Left ventricle myocardium inferior (tissue), 1 donor: ENCODE measurements at regions of chr5 and their contacts with region 1.

Region 1: DNA sequence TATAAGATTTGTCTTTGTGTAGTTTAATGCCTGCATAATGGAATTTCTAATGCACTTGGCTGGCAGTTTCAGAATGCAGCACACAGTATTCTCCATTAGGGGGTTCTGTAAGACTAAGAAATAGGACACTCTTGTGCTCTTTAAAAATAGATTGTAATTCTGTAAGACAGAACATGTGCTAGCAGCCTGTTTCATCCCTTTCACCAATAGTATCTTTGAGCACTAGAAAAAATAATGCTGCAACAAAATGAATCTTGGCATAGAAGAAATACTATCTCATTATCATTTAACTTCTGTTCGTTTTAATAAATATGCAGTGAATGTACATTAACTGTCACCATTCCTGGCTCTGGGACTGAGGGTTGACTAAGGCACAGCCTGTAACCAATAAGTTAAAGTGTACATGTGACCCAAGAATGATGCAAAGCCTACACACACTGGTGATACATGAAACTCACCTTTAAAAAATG is 23.8 kb upstream of the ZNF622 start:
- DNase-seq: no peak
- H3K4me3 ChIP-seq: no peak overlapping the region
- H3K27ac ChIP-seq: peak overlapping the region; percentile 86
- H3K4me1 ChIP-seq: peaks cover 95% of the 10 kb centered on the region
- H3K27me3 ChIP-seq: no peaks in the 10 kb centered on the region
- CTCF ChIP-seq: peak; percentile 77

Region 2: GRCh38 chr5:16364910-16365309 is 124.4 kb before region 1 on chr5:
- intact Hi-C with region 1: no loop called
- DNase-seq: no peak
- H3K4me3 ChIP-seq: no peak overlapping the region
- H3K27ac ChIP-seq: no peak overlapping the region
- H3K4me1 ChIP-seq: no peaks in the 10 kb centered on the region
- H3K27me3 ChIP-seq: no peaks in the 10 kb centered on the region
- CTCF ChIP-seq: no peak

Region 3: DNA sequence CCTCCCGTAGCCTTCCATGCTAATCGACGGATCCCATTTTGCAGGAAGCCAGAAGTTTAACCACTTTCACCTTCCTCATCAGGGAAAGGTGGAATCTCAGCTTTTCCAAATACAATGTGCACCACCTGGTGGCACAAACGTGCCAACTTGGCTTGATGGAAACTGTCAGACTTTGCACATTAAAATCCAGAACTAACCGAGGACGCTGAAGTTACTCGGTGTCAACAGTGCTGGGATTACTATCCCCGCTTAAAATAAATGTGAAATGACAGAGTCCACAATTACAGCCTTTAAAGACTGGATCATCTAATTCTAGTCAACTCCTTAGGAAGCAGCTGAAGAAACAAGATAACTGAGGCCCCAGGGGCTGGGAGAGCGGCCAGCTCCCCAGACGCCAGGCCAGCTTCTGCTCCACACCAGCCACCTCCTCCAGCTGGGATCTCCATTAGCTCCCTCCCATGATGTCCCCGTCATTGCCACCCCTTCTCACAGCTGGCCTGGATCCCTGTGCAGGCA is 177.6 kb after region 1 on chr5:
- intact Hi-C with region 1: loop called (anchors 10 kb)
- DNase-seq: peak; percentile 66
- H3K4me3 ChIP-seq: peak overlapping the region; percentile 5
- H3K27ac ChIP-seq: peak overlapping the region; percentile 47
- H3K4me1 ChIP-seq: peaks cover 42% of the 10 kb centered on the region
- H3K27me3 ChIP-seq: no peaks in the 10 kb centered on the region
- CTCF ChIP-seq: peak; percentile 66

Region 4: DNA sequence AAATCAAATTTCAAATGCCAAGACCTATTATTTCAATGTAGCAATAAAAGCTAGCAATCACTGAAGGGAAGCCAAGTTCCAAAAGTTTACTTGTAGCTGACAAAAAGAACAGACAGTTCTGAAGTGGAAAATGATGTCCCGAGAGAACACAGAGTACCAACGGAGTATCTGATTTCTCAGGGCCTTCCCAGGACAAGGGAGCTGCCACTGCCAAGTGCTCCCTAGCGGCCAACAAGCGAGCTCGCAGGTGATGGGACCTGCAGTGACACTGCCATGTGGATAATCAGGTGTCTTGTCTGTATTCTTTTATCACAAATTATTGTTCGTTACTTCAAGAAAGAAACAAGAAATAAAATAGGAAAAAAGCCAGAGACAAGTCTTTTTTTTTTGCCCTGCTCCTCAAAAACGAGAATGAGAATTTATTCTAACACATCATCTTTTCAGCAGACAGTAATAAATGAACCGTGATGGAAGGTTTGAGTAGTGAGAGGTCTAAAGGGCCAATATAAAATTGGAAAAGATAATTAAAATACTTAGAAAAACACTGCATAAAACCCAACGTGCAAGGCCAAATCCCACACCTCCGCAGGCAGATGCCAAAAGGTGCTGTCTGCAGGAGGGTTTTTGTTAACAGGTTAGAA is 287.4 kb after region 1 on chr5:
- intact Hi-C with region 1: no loop called
- DNase-seq: no peak
- H3K4me3 ChIP-seq: no peak overlapping the region
- H3K27ac ChIP-seq: peak overlapping the region; percentile 1
- H3K4me1 ChIP-seq: peaks cover 10% of the 10 kb centered on the region
- H3K27me3 ChIP-seq: no peaks in the 10 kb centered on the region
- CTCF ChIP-seq: peak; percentile 58